ENCODE measurements at regions of chr9 and their contacts with region 1.

Region 1: DNA sequence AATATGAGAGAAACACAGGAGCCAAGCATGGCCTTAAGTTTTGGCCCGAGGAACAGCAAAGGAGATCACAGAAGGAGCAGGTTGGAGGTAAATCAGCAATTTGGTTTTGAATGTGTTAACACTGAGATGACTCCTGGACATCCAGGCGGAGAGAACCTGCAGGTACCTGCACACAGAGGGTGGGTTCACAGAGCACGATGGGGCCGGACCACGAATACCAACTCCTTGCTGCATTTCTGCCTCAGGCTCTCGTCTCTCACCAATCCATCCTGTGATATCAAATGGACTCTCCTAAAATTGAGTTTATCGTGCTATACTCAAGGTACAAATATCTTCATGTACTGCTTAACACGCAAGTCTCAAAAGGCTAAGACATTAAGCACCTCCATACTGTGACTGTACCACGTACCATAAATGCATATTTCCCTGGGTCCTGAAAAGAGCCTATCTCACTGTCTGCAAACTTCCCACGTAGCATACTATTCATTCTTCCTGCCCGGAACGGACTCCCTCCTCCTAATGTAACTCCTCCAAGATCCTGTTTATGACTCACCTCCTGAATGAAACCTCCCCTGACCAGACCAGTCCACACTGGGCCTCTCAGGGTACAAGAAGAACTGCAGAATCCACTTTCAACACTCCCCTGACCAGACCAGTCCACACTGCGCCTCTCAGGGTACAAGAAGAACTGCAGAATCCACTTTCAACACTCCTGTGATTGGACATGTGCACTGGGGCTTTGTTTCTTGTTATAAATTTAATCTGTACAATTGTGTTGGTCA is 380.8 kb upstream of the RFX3 start:
- DNase-seq: peak; percentile 88
- ATAC-seq: peak; percentile 98
- H3K4me3 ChIP-seq: no peak overlapping the region
- H3K27ac ChIP-seq: peak overlapping the region; percentile 98
- H3K4me1 ChIP-seq: peaks cover 19% of the 10 kb centered on the region
- H3K27me3 ChIP-seq: no peaks in the 10 kb centered on the region
- CTCF ChIP-seq: peak; percentile 36; the same call in 1 of the 2 replicates

Region 2: GRCh38 chr9:3732077-3733038 is 174.3 kb before region 1 on chr9:
- CTCF ChIA-PET with region 1: no interaction called
- POLR2A ChIA-PET with region 1: no interaction called
- intact Hi-C with region 1: no loop called
- DNase-seq: peak; percentile 91
- ATAC-seq: peak; percentile 89
- H3K4me3 ChIP-seq: no peak overlapping the region
- H3K27ac ChIP-seq: peak overlapping the region; percentile 90
- H3K4me1 ChIP-seq: peaks cover 29% of the 10 kb centered on the region
- H3K27me3 ChIP-seq: no peaks in the 10 kb centered on the region
- CTCF ChIP-seq: peak; percentile 76

Region 3: DNA sequence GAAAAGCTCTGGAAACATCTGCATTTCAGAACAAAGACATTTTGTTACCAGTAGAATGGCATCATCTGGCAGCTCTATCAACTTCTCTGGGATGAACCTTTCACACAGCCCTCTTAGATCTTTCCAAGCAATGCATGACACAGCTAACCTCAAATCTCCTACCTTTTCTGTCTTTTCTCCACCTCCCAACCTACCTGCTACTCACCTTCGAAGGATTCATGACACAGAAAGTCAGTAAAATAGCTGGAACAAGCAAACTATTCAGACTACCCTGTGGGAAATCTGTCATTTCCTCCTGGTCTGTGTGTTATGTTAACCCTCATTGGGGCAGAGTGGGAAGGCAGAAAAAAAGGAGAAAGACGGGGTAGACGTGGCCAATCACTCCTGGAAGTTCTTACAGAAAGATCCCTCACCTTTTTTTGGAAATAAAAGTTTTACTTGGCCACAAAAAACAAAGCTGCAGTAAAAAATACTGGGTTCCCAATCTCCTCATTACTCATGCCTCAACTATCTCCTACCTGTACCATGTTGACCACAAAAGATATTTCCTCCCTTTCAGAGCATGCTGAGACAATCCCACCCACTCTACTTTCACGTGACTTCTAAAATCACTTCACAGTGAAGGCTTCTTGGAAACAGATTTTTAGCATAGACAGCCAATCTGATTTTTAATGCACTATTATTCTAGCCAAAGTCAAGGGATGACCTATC is 18.7 kb before region 1 on chr9:
- CTCF ChIA-PET with region 1: no interaction called
- POLR2A ChIA-PET with region 1: no interaction called
- intact Hi-C with region 1: loop called (anchors 1 kb)
- DNase-seq: peak; percentile 40
- ATAC-seq: no peak
- H3K4me3 ChIP-seq: no peak overlapping the region
- H3K27ac ChIP-seq: peak overlapping the region; percentile 66
- H3K4me1 ChIP-seq: peaks cover 12% of the 10 kb centered on the region
- H3K27me3 ChIP-seq: no peaks in the 10 kb centered on the region
- CTCF ChIP-seq: no peak

Region 4: DNA sequence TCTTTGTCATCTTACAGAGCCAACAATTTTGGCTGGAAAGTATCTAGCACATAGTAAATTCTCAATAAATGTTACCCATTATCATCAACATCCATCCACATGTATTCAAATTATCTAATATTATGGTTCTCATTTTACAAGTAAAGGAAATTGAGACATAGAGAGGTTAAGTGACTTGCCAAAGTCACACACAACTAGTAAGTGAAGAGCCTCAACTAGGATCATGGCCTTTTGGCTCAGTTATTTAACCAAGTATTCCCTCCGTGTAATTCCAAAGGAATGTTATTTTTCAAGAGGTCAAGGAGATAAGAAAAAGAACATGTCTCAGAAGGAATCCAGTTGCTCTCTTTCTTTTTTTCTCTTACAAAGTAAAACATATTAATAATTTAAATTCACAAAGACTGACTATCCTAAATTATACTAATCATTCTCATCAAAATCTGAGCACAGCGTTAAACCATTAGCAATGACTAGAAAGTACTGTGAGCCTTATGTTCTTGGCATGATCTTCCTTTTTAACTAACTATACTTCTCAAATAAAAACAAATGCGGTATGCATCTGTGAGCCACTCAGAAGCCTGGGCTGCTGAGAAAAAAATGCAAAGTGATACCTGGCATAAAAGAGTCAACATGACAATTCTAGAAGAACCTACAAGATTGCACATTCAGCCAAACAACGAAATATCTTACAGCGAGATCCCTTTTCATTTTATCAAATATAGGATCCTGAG is 42.4 kb after region 1 on chr9:
- CTCF ChIA-PET with region 1: no interaction called
- POLR2A ChIA-PET with region 1: no interaction called
- intact Hi-C with region 1: no loop called
- DNase-seq: peak; percentile 11
- ATAC-seq: no peak
- H3K4me3 ChIP-seq: no peak overlapping the region
- H3K27ac ChIP-seq: no peak overlapping the region
- H3K4me1 ChIP-seq: no peaks in the 10 kb centered on the region
- H3K27me3 ChIP-seq: no peaks in the 10 kb centered on the region
- CTCF ChIP-seq: no peak